Astrocyte of the cerebellum (primary cell): ENCODE measurements at regions of chr3 and their contacts with region 1.

Region 1: GRCh38 chr3:36756269-36756668 is 8.1 kb downstream of the DCLK3 start:
- DNase-seq: no peak
- H3K4me3 ChIP-seq: no peak overlapping the region
- CTCF ChIP-seq: no peak

Region 2: DNA sequence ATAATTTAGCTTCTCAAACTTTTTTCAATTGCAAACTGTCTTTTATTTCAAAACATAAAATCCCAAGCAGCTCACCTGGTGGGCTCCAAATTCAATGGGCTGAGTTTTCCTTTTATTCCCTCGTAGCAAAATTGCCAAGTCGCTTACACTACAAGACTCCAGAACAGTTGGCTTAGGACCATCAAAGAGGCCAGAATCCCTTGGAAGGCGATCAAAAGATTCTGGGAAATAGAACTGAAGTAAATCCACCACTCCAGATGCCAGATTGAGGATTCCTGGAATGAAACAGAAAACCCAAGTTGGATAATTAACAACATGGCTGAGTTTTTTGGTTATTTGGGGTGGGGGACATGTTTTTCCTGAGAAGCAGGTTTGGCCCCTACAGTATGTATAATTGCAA is 95.8 kb after region 1 on chr3:
- in situ Hi-C with region 1: loop called (anchors 5 kb)
- DNase-seq: peak; percentile 51
- H3K4me3 ChIP-seq: no peak overlapping the region
- CTCF ChIP-seq: no peak